ENCODE measurements at regions of chr11 and their contacts with region 1.

Region 1: GRCh38 chr11:1262172-1263006 is 39.5 kb downstream of the MUC5B start:
- DNase-seq: peak; percentile 96
- H3K4me3 ChIP-seq: peak overlapping the region; percentile 51 to 65 (median 52)
- H3K27ac ChIP-seq: peak overlapping the region; percentile 72 to 83 (median 78)
- H3K4me1 ChIP-seq: peaks cover 16 to 25% (median 21%) of the 10 kb centered on the region in 4 donors
- H3K27me3 ChIP-seq: no peaks in the 10 kb centered on the region
- CTCF ChIP-seq: peak in 1 of 3 experiments; percentile 26
- EP300 ChIP-seq: no peak
- POLR2A ChIP-seq: no peak

Region 2: GRCh38 chr11:1309498-1310317 is 47.3 kb after region 1 on chr11 and contains the start of gene TOLLIP:
- intact Hi-C with region 1: loop called (anchors 5 kb)
- DNase-seq: peak; percentile 98
- H3K4me3 ChIP-seq: peak within 1 kb of the TSS; percentile 85 to 100 (median 98)
- H3K27ac ChIP-seq: peak within 1 kb of the TSS; percentile 94 to 98 (median 96)
- H3K4me1 ChIP-seq: peaks cover 39 to 57% (median 54%) of the 10 kb centered on the region in 4 donors
- H3K27me3 ChIP-seq: no peaks in the 10 kb centered on the region
- CTCF ChIP-seq: peak; percentile 16 to 69 (median 43)
- EP300 ChIP-seq: no peak
- POLR2A ChIP-seq: peak; percentile 74
- total RNA-seq, gene TOLLIP: 33.2 to 71.6 (median 58.6) TPM

Region 3: GRCh38 chr11:1335811-1336761 is 73.7 kb after region 1 on chr11:
- intact Hi-C with region 1: loop called (anchors 10 kb)
- DNase-seq: peak; percentile 94
- H3K4me3 ChIP-seq: peak overlapping the region; percentile 59 to 71 (median 64)
- H3K27ac ChIP-seq: peak overlapping the region; percentile 82 to 89 (median 88)
- H3K4me1 ChIP-seq: peaks cover 17 to 27% (median 26%) of the 10 kb centered on the region in 4 donors
- H3K27me3 ChIP-seq: no peaks in the 10 kb centered on the region
- CTCF ChIP-seq: no peak
- EP300 ChIP-seq: no peak
- POLR2A ChIP-seq: peak; percentile 34

Region 4: DNA sequence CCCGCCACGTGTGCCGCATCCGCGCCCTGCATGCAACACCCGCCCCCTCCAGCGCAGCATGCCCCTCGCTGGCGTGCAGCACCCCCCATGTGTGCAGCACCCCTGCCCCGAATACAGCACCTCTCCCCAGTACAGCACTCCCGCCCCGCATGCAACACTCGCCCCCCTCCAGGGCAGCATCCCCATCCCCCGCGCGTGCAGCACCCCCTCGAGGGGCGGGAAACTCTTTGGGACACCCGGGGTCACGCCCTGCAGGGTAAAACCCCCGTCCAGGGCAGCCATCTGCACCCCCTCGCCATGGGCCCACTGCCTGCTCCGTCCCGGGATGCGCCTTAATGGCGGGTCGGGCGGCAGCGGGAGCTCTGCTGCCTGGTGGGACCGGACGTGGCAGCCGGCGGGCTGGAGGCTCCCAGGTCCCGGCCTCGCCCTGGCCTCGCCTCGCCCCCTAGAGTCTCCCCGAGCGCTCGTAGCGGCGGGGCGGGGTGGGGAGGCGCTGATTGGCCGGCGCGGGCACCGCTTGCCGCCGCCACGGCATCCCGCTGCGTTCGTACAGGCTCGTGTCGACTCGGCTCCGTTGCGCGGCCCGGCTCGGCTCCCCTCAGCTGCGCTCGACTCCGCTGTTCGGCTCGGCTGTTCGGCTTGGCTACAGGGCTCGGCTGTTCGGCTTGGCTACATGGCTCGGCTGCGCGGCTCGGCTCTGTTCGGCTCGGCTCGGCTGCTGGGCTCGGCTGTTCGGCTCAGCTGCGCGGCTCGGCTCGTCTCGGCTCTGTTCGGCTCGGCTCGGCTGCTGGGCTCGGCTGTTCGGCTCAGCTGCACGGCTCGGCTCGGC is 126.9 kb after region 1 on chr11:
- intact Hi-C with region 1: loop called (anchors 10 kb)
- DNase-seq: peak; percentile 98
- H3K4me3 ChIP-seq: peak overlapping the region; percentile 58 to 76 (median 62)
- H3K27ac ChIP-seq: peak overlapping the region; percentile 73 to 80 (median 76)
- H3K4me1 ChIP-seq: peaks cover 14 to 26% (median 20%) of the 10 kb centered on the region in 4 donors
- H3K27me3 ChIP-seq: peaks cover 5 to 45% (median 26%) of the 10 kb centered on the region in 4 donors
- CTCF ChIP-seq: peak; percentile 25 to 33 (median 31)
- EP300 ChIP-seq: no peak
- POLR2A ChIP-seq: no peak

Region 5: DNA sequence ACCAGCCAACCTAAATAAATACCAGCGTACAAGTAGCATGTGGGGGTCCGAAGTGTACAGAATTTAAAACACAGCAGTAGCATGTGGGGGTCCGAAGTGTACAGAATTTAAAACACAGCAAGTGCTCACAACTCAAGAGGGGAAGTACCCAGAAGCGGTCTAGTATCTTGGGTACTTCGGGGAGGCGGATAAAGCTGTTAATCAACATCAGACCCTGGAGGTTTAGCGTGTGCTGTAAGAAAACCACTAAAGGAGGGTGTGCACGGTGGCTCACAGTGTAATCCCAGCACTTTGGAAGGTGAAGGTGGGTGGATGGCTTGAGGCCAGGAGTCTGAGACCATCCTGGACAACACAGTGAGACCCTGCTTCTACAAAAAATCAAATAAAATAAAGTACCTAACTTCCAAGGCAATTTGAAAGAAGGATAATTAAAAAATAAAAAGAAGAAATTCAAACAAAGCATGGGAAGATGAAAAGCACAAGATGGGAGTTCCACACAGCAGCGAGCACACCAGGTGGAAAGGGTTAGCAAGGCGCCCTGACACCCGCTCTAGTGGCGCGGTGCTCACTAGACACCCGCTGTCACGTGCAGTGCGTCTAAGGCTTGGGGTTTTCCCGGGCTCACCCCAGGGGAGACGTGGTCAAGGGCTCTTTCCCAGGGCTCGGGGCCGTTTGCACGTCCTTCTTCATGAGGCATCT is 259.1 kb after region 1 on chr11:
- intact Hi-C with region 1: loop called (anchors 5 kb)
- DNase-seq: no peak
- H3K4me3 ChIP-seq: no peak overlapping the region
- H3K27ac ChIP-seq: no peak overlapping the region
- H3K4me1 ChIP-seq: peaks cover 51 to 80% (median 65%) of the 10 kb centered on the region in 4 donors
- H3K27me3 ChIP-seq: no peaks in the 10 kb centered on the region
- CTCF ChIP-seq: no peak
- EP300 ChIP-seq: no peak
- POLR2A ChIP-seq: no peak

Measured in esophagus muscularis mucosa (tissue), 4 donors.